Naive thymus-derived CD4-positive, alpha-beta T cell (primary cell): ENCODE measurements at regions of chr15 and their contacts with region 1.

Region 1: GRCh38 chr15:96535148-96535547 is 204.6 kb downstream of the NR2F2 start:
- DNase-seq: no peak
- ATAC-seq: no peak
- H3K4me3 ChIP-seq: no peak overlapping the region
- H3K4me3 Mint-ChIP-seq: no peak overlapping the region
- H3K27ac ChIP-seq: no peak overlapping the region
- H3K27ac Mint-ChIP-seq: no peak overlapping the region
- H3K4me1 ChIP-seq: no peaks in the 10 kb centered on the region
- H3K4me1 Mint-ChIP-seq: peaks cover 0 to 2% (median 0%) of the 10 kb centered on the region in 7 donors
- H3K27me3 ChIP-seq: no peaks in the 10 kb centered on the region
- H3K27me3 Mint-ChIP-seq: peaks cover 0 to 17% (median 10%) of the 10 kb centered on the region in 5 donors

Region 2: GRCh38 chr15:96031426-96032110 is 503.6 kb before region 1 on chr15:
- CTCF ChIA-PET with region 1: no interaction called
- POLR2A ChIA-PET with region 1: no interaction called
- intact Hi-C with region 1: loop called in 1 of 2 experiments (anchors 5 kb)
- DNase-seq: no peak
- ATAC-seq: no peak
- H3K4me3 ChIP-seq: no peak overlapping the region
- H3K4me3 Mint-ChIP-seq: no peak overlapping the region
- H3K27ac ChIP-seq: no peak overlapping the region
- H3K27ac Mint-ChIP-seq: no peak overlapping the region
- H3K4me1 ChIP-seq: peaks cover 0 to 2% of the 10 kb centered on the region in 2 donors
- H3K4me1 Mint-ChIP-seq: peaks cover 0 to 3% (median 0%) of the 10 kb centered on the region in 7 donors
- H3K27me3 ChIP-seq: no peaks in the 10 kb centered on the region
- H3K27me3 Mint-ChIP-seq: peaks cover 41 to 55% (median 44%) of the 10 kb centered on the region in 5 donors